A673 (cell line): ENCODE measurements at regions of chr4 and their contacts with region 1.

Region 1: GRCh38 chr4:103915224-103915869 is 195.6 kb upstream of the TACR3 start:
- DNase-seq: peak; percentile 31
- H3K4me3 ChIP-seq: no peak overlapping the region
- H3K27ac ChIP-seq: no peak overlapping the region
- H3K4me1 ChIP-seq: no peaks in the 10 kb centered on the region
- H3K27me3 ChIP-seq: no peaks in the 10 kb centered on the region
- CTCF ChIP-seq: peak; percentile 81

Region 2: GRCh38 chr4:103204111-103204510 is 711.2 kb before region 1 on chr4:
- CTCF ChIA-PET with region 1: no interaction called
- POLR2A ChIA-PET with region 1: no interaction called
- intact Hi-C with region 1: loop called (anchors 5 kb)
- DNase-seq: peak; percentile 23
- H3K4me3 ChIP-seq: no peak overlapping the region
- H3K27ac ChIP-seq: no peak overlapping the region
- H3K4me1 ChIP-seq: no peaks in the 10 kb centered on the region
- H3K27me3 ChIP-seq: no peaks in the 10 kb centered on the region
- CTCF ChIP-seq: peak; percentile 60

Region 3: GRCh38 chr4:103634236-103634635 is 281.1 kb before region 1 on chr4:
- CTCF ChIA-PET with region 1: no interaction called
- POLR2A ChIA-PET with region 1: no interaction called
- intact Hi-C with region 1: loop called (anchors 5 kb)
- DNase-seq: peak; percentile 2
- H3K4me3 ChIP-seq: no peak overlapping the region
- H3K27ac ChIP-seq: no peak overlapping the region
- H3K4me1 ChIP-seq: no peaks in the 10 kb centered on the region
- H3K27me3 ChIP-seq: no peaks in the 10 kb centered on the region
- CTCF ChIP-seq: peak; percentile 34

Region 4: DNA sequence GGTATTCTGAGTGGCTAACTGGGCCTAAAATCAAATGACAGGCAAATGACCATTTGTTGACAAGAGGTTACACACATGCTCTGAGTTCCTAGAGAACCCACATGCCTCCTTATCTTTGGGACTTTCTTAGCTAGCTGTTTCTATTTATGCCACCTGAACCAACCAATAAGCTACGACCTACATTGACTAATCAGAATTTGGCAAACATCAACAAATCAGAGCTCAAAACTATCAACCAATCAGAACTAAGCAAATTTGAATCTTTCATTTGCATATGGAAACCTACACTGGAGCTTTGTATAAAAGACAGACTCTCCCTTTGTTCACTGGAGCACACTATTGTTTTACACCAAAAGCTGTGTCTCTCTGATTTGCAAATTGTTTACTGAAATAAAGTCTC is 387.4 kb after region 1 on chr4:
- CTCF ChIA-PET with region 1: no interaction called
- POLR2A ChIA-PET with region 1: no interaction called
- intact Hi-C with region 1: no loop called
- DNase-seq: no peak
- H3K4me3 ChIP-seq: no peak overlapping the region
- H3K27ac ChIP-seq: no peak overlapping the region
- H3K4me1 ChIP-seq: no peaks in the 10 kb centered on the region
- H3K27me3 ChIP-seq: no peaks in the 10 kb centered on the region
- CTCF ChIP-seq: no peak